IMR-90 (cell line): ENCODE measurements at regions of chr3 and their contacts with region 1.

Region 1: DNA sequence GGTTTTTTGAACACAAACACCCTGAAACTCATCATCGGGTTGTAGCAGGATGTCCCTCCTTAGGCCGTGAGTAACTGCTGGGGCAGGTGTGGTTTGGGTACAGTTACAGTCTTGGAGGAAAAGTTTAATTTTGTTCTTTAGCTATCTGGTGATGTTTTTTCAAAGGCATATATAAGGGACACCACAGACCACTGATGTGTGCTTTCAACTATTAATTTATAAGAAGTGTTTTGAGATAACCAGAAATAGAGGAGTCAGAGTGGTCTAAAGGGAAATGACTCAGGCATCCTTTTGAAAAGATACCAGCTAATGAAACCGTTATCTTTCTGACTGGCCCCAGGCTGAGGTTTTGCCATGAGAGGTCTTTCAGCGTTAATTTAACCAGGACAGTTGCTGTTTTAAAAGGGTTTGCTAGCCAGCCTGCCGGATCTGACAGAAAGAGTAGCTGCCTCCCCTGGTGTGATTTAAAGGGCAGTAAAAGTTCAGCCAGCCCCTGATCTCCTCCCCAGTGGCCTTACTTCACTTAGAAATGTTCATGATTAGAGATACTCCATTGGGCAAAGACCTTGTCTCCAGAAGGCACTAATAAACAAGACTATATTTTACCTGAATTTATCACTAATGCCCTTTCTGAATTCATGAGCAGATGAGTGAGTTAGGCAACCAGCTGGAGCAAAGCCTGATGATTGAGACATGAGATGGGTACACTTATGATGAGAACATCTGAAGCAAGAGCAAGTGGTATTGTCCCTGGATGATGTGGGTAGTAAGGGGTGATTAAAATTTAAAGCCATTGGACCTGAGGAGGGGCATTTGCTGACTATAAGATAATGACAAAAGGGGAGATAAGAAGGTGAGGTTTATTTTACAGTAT is 482.5 kb upstream of the TBL1XR1 start:
- DNase-seq: peak; percentile 48
- ATAC-seq: peak; percentile 54
- H3K4me3 ChIP-seq: no peak overlapping the region
- H3K27ac ChIP-seq: no peak overlapping the region
- H3K4me1 ChIP-seq: peaks cover 6% of the 10 kb centered on the region
- H3K27me3 ChIP-seq: no peaks in the 10 kb centered on the region
- CTCF ChIP-seq: no peak
- POLR2A ChIP-seq: no peak
- RAD21 ChIP-seq: no peak

Region 2: GRCh38 chr3:177640319-177640997 is 39.3 kb before region 1 on chr3:
- CTCF ChIA-PET with region 1: no interaction called
- POLR2A ChIA-PET with region 1: no interaction called
- dilution Hi-C with region 1: no loop called
- in situ Hi-C with region 1: no loop called
- intact Hi-C with region 1: no loop called
- DNase-seq: no peak
- ATAC-seq: no peak
- H3K4me3 ChIP-seq: no peak overlapping the region
- H3K27ac ChIP-seq: no peak overlapping the region
- H3K4me1 ChIP-seq: no peaks in the 10 kb centered on the region
- H3K27me3 ChIP-seq: no peaks in the 10 kb centered on the region
- CTCF ChIP-seq: no peak
- POLR2A ChIP-seq: no peak
- RAD21 ChIP-seq: no peak

Region 3: DNA sequence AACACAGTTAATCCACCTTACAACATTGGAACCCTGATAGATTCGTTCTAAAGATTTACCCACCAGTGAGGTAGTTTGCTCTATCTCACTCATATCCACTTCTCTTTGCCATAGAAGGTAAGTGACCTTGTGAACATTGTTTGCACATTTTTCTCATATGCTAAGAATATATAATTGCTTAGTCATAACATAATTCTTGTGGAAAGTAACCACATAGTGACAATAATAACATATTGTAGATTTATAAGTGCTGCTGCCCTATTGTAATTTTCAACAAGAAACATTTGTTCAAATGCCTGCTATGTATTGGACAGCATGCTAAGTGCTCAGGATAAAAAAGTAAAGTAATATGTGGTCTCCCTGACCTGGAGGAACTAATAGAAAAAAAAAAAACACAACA is 302.2 kb after region 1 on chr3:
- CTCF ChIA-PET with region 1: no interaction called
- POLR2A ChIA-PET with region 1: no interaction called
- dilution Hi-C with region 1: no loop called
- in situ Hi-C with region 1: no loop called
- intact Hi-C with region 1: loop called (anchors 5 kb)
- DNase-seq: peak; percentile 52
- ATAC-seq: 0 out of 2 replicates have a peak, but pooled peaks have one; percentile 12
- H3K4me3 ChIP-seq: no peak overlapping the region
- H3K27ac ChIP-seq: no peak overlapping the region
- H3K4me1 ChIP-seq: peaks cover 2% of the 10 kb centered on the region
- H3K27me3 ChIP-seq: no peaks in the 10 kb centered on the region
- CTCF ChIP-seq: no peak
- POLR2A ChIP-seq: no peak
- RAD21 ChIP-seq: no peak